Dorsolateral prefrontal cortex (tissue), 120 donors: ENCODE measurements at regions of chr2 and their contacts with region 1.

Region 1: GRCh38 chr2:197777823-197778407 is 7.2 kb downstream of the BOLL start:
- DNase-seq: no peak
- H3K4me3 ChIP-seq: no peak overlapping the region
- H3K27ac ChIP-seq: no peak overlapping the region
- H3K27me3 ChIP-seq: no peaks in the 10 kb centered on the region
- CTCF ChIP-seq: peak; percentile 61 to 93 (median 80)

Region 2: DNA sequence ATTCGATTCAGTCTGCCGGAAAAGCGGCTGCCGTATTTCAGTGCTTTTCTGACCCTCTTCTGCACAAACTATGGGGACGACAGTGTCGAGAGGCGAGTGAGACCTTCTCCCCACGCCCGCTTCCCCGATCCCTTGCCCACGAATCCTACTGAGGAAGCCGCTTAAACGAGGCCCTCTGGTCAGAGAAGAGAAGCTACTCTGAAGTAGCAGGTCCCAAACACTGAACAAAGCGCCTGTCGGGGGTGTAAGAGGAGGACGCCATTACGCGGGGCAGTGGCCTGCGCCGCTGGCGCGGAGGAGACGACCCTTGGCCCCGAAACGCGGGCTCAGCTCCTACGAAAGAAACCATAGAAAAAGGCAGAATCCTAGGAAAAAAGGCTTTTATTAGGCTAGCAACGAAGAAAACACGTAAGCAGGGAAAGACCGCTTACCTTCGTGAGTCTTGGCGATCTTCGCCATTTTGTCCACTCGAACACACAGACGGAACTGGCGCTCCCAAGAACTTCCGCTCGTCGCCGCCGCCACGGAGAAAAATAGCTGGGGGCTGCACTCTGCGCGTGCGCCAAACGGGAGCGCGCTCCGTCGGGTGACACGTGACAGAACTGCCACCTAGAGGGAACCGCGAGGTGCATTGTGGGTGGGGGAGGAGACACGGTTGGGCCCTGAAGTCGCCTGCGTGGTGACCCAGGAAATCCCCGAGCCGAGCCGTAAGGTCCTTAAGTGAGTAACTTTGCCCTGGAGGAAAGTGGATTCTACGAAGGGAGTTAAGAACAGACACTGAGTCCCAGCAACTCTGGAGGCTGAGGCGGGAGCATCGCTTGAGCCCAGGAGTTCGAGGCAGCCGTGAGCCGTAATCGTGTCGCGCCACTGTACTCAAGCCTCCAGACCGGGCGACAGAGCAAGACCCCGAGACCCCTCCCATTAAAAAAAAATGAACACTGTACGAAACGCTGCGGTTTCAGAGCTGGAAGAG is 343.1 kb before region 1 on chr2 and contains the start of gene SF3B1:
- intact Hi-C with region 1: loop called in 1 of 2 experiments (anchors 10 kb)
- DNase-seq: peak; percentile 96 to 99 (median 98)
- H3K4me3 ChIP-seq: peak within 1 kb of the TSS; percentile 52 to 100 (median 92)
- H3K27ac ChIP-seq: peak within 1 kb of the TSS; percentile 81 to 99 (median 96)
- H3K27me3 ChIP-seq: no peaks in the 10 kb centered on the region
- CTCF ChIP-seq: peak in 46 of 56 donors; percentile 7 to 65 (median 33)
- total RNA-seq, gene SF3B1: 151 to 275 (median 208) TPM

Region 3: DNA sequence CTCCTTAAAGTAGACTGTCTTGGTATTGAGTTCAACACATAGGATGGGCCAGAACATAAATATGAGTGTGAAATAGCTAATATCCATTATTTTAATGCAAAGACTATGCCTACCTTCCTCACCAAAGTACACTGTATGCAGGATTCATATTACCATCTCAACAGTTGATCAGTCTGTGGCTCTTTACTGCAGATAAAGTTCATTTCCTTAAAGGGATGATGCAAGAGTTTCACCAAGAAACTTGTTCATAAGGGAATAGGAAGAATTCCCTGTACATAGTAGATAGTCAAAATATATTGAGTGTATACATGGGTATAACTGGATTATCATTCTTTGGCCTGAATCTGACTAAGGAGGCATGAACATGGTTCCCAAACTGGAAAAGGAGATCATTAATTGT is 37.7 kb before region 1 on chr2:
- intact Hi-C with region 1: no loop called
- DNase-seq: no peak
- H3K4me3 ChIP-seq: no peak overlapping the region
- H3K27ac ChIP-seq: no peak overlapping the region
- H3K27me3 ChIP-seq: no peaks in the 10 kb centered on the region
- CTCF ChIP-seq: no peak